Colonic mucosa (tissue), 4 donors: ENCODE measurements at regions of chr4 and their contacts with region 1.

Region 1: DNA sequence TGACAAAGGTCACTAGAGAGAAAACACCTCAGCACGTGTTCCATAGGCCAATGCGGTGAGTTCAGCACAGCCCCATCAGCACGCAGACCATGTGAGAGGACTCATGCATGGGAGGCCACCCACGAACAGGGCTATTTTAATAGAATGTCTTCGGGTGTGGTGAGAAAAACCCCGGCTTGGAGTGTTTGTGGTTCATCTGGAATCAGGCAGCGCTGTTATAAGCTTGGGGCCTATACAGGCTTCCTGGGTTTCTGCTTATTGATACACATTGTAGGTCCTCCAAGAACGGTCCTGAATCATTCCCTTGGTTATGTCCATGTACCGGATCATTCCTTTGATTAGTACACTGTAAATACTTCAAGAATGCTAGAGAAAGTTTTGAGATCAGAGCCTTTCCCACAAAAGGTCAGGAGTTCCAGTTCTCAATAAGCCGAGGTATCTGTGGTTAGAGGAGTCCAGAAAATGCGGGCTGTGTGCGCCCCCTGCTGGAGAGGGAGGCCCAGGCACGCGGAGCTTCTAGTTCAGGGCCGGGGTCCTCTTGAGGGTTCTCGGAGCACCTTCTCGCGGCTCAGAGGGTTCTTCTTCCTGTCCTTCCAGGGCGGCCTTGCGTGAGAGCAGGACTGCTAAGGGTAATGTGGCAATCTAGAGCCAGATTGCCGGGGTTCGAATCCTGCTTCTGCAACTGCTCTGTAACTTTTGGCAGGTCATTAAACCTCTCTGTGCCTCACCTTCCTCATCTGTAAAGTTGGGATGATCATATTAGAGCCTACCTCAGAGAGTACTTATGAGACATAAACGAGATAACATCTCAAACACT is 51.8 kb downstream of the TLR10 start:
- DNase-seq: peak; percentile 93
- H3K4me3 ChIP-seq: no peak overlapping the region
- H3K27ac ChIP-seq: peak overlapping the region; percentile 37
- H3K4me1 ChIP-seq: peaks cover 6% of the 10 kb centered on the region
- H3K27me3 ChIP-seq: no peaks in the 10 kb centered on the region
- CTCF ChIP-seq: peak; percentile 94

Region 2: GRCh38 chr4:38062088-38062893 is 668.7 kb before region 1 on chr4:
- intact Hi-C with region 1: loop called (anchors 2 kb)
- DNase-seq: peak; percentile 90
- H3K4me3 ChIP-seq: no peak overlapping the region
- H3K27ac ChIP-seq: peak overlapping the region; percentile 38
- H3K4me1 ChIP-seq: no peaks in the 10 kb centered on the region
- H3K27me3 ChIP-seq: no peaks in the 10 kb centered on the region
- CTCF ChIP-seq: peak; percentile 83

Region 3: DNA sequence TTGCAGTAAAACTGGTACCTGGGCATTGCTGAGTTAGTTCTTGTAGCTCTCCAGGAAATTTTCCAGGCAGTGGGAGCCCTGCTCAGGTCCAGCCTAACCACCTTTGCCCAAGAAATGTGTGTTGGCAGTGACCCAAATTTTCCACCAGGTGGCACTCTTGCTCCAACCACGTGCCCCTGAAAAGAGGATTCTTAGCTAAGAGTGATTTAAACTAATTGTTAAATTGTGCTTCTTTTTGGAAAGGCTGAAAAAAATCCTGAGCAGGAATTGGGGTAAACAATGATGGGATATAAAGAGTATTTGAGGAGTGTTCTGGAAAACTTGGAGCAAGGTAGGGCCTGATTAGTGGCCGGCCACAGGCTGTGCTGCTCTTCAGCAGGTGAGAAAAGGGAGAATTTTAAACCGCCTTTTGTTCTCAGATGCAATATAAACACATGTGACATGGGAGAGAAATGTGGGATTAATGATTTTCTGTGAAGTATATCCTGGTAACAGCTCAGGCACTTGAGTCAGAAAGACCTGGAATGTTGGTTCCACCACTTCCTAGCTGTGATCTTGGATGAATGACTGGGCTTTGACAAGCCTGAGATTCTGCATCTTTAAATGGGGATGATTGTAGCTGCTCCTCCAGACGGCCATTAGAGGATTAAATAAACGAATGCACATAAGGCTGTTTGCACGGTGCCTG is 551.2 kb before region 1 on chr4:
- intact Hi-C with region 1: loop called (anchors 2 kb)
- DNase-seq: peak; percentile 88
- H3K4me3 ChIP-seq: no peak overlapping the region
- H3K27ac ChIP-seq: peak overlapping the region; percentile 38
- H3K4me1 ChIP-seq: no peaks in the 10 kb centered on the region
- H3K27me3 ChIP-seq: no peaks in the 10 kb centered on the region
- CTCF ChIP-seq: peak; percentile 99

Region 4: GRCh38 chr4:38319456-38320342 is 411.3 kb before region 1 on chr4:
- intact Hi-C with region 1: loop called (anchors 2 kb)
- DNase-seq: peak; percentile 99
- H3K4me3 ChIP-seq: peak overlapping the region; percentile 26
- H3K27ac ChIP-seq: peak overlapping the region; percentile 92
- H3K4me1 ChIP-seq: peaks cover 7% of the 10 kb centered on the region
- H3K27me3 ChIP-seq: no peaks in the 10 kb centered on the region
- CTCF ChIP-seq: peak; percentile 99

Region 5: GRCh38 chr4:38400946-38401345 is 330.1 kb before region 1 on chr4:
- intact Hi-C with region 1: no loop called
- DNase-seq: no peak
- H3K4me3 ChIP-seq: no peak overlapping the region
- H3K27ac ChIP-seq: no peak overlapping the region
- H3K4me1 ChIP-seq: no peaks in the 10 kb centered on the region
- H3K27me3 ChIP-seq: no peaks in the 10 kb centered on the region
- CTCF ChIP-seq: no peak

Region 6: DNA sequence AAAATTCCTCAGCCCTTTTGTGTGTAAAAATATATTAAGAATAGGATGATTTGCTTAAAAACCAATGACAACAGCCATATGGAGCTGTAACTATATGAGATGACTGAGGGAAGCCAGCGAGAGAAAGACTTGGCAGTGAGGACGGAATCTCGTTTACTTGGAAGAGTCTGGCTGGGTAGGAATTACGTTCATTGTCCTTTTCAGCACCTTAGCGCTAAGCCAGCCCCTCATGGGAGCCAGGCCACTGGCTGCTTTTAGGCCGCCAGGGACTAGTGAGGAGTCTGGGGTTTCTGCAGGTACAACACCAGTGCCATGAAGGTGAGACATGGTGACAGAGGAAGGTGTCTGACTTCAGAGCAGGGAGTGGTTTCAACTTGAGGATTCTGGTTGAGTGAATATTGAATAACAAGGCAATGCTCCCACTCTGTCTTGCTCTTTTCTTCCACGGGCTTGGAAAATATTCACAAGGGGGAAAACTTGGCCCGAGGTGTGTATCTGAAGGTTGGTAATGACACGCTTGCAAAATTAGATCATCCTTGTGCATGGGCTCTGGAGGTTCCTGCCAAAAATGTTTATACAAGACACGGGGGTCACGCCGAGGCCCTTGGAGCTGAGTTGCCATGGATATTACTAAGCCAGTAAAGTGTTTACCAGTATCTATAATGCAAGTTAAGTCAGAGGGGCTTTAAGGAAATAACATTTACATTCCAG is 49.6 kb before region 1 on chr4:
- intact Hi-C with region 1: loop called (anchors 5 kb)
- DNase-seq: no peak
- H3K4me3 ChIP-seq: no peak overlapping the region
- H3K27ac ChIP-seq: no peak overlapping the region
- H3K4me1 ChIP-seq: peaks cover 6% of the 10 kb centered on the region
- H3K27me3 ChIP-seq: no peaks in the 10 kb centered on the region
- CTCF ChIP-seq: no peak

Region 7: DNA sequence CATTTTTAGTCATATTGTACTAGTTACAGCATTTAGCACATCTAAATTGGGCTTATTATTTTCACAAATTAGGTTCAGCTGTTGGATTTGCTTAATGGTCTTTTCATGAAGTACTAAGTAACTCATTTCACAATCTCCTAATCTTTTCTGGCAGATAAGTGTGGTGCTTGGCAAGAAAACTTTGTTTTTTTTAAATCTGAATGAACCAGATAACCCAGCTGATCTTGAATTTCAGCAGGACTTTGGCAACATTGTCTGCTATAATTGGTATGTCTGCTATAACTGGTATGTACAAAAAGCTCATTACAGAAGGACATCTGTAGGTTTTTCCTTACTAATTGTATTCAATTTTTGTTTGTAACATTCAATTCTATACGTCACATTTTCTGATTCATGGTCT is 474.0 kb after region 1 on chr4:
- intact Hi-C with region 1: no loop called
- DNase-seq: no peak
- H3K4me3 ChIP-seq: no peak overlapping the region
- H3K27ac ChIP-seq: no peak overlapping the region
- H3K4me1 ChIP-seq: no peaks in the 10 kb centered on the region
- H3K27me3 ChIP-seq: no peaks in the 10 kb centered on the region
- CTCF ChIP-seq: no peak